ENCODE measurements at regions of chr7 and their contacts with region 1.

Region 1: GRCh38 chr7:44973610-44974401 is 5.0 kb downstream of the MYO1G start:
- DNase-seq: peak; percentile 44 to 72 (median 61)
- H3K4me3 ChIP-seq: no peak overlapping the region
- H3K4me3 Mint-ChIP-seq: peak overlapping the region in 1 of 8 donors; percentile 46
- H3K27ac ChIP-seq: peak overlapping the region; percentile 85
- H3K27ac Mint-ChIP-seq: peak overlapping the region in 6 of 7 donors; percentile 43 to 84 (median 51)
- H3K4me1 ChIP-seq: peaks cover 50% of the 10 kb centered on the region
- H3K4me1 Mint-ChIP-seq: peaks cover 12 to 62% (median 37%) of the 10 kb centered on the region in 4 donors
- H3K27me3 ChIP-seq: no peaks in the 10 kb centered on the region
- H3K27me3 Mint-ChIP-seq: no peaks in the 10 kb centered on the region

Region 2: DNA sequence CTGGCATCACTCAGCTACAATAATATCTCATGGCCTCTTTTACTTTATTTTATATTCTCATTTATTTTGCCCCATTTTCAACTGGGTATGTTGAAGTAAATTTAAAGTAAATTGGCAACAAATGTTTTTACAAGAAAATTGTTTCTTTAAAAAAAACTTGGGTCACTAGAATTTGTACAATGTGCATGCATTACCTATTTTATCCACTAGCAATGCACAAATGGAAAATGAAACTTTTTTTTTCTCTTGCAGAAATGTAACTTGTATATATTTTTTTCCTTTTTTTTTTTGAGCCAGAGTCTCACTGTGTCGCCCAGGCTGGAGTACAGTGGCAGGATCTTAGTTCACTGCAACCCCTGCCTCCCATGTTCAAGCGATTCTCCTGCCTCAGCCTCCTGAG is 115.6 kb before region 1 on chr7:
- CTCF ChIA-PET with region 1: interaction called, 11 read pairs
- POLR2A ChIA-PET with region 1: no interaction called
- intact Hi-C with region 1: no loop called
- DNase-seq: no peak
- H3K4me3 ChIP-seq: no peak overlapping the region
- H3K4me3 Mint-ChIP-seq: no peak overlapping the region
- H3K27ac ChIP-seq: no peak overlapping the region
- H3K27ac Mint-ChIP-seq: peak overlapping the region in 1 of 7 donors; percentile 24
- H3K4me1 ChIP-seq: peaks cover 5% of the 10 kb centered on the region
- H3K4me1 Mint-ChIP-seq: peaks cover 3 to 6% (median 4%) of the 10 kb centered on the region in 4 donors
- H3K27me3 ChIP-seq: no peaks in the 10 kb centered on the region
- H3K27me3 Mint-ChIP-seq: peaks cover 0 to 7% of the 10 kb centered on the region in 2 donors

Region 3: DNA sequence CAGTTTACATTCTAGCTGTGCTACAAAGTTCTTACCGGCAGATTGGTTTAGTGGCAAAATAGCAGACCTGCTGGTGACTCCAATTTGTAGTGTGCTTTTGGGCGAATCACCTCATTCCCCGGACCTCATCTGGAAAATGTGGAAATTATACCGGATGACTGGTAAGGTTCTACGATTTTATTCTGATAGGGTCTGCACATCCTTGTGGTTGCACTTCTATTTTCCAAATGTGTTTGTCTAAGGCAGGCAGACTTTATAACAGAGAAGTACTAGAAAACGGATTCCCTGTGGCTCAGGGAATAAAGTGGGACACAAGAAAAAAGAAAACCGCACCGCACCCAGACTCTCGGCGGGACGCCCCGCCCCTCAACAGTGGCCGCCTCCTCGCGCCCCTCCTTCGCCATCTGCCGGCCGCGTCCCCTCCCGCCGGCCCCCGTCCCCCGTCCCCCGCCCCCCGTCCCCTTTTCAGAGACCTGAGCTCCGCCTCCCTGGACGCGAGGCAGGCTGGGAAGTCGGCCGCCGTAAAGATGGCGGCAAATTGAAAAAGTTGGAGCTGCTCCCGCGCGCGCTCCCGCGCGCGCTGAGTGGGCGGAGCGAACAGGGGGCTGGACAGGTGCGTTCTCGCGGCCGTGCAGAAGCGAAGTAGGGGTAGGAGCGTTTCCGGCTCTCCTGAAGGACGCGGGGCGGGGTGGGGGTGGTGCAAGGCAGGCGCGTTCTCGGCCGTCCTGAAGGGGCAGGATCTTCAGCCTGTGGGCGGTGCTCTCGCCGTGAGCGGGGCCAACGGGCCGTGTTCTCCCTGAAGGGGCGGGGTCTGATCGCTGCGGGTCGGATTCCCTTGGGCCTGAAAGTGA is 25.7 kb after region 1 on chr7:
- CTCF ChIA-PET with region 1: interaction called, 150 read pairs
- POLR2A ChIA-PET with region 1: interaction called, 479 read pairs
- intact Hi-C with region 1: loop called (anchors 1 kb)
- DNase-seq: peak; percentile 98 to 99 (median 99)
- H3K4me3 ChIP-seq: peak overlapping the region; percentile 18 to 60
- H3K4me3 Mint-ChIP-seq: peak overlapping the region; percentile 94 to 99 (median 96)
- H3K27ac ChIP-seq: peak overlapping the region; percentile 74
- H3K27ac Mint-ChIP-seq: peak overlapping the region; percentile 94 to 99 (median 97)
- H3K4me1 ChIP-seq: peaks cover 66% of the 10 kb centered on the region
- H3K4me1 Mint-ChIP-seq: peaks cover 38 to 63% (median 51%) of the 10 kb centered on the region in 4 donors
- H3K27me3 ChIP-seq: no peaks in the 10 kb centered on the region
- H3K27me3 Mint-ChIP-seq: no peaks in the 10 kb centered on the region

Region 4: DNA sequence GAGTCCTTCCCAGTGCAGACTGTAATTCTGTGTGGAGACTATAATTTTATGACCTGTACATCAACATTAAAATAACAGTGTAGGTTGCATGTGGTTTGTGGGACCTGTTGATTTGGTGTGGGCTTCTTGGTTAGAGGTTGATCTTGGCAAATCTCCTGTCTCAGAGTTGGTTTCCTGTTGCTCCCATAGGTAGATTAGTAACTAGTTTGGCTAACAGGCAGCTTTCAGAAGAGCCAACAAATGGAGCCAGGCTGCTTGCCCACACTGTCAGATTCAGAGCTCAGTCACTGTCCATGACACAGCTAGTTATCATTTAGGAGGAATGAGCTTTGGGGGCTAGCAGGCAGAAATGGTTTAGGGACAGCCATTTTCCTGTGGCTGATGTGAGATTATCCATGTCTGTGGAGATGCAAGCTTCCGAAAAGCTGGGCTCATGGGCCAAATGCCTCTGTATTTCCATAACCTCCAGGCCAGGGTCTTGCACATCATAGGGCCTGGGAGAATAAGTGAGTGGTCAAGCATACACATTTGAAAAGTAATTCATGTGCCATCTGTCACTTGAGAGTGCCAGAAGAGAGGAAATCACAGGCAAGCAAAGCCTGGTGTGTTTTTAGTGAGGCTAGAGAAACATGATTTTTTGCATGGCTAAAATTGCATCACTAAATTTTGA is 59.6 kb after region 1 on chr7:
- CTCF ChIA-PET with region 1: interaction called, 120 read pairs
- POLR2A ChIA-PET with region 1: interaction called, 551 read pairs
- intact Hi-C with region 1: no loop called
- DNase-seq: peak; percentile 23 to 47 (median 29)
- H3K4me3 ChIP-seq: peak overlapping the region in 1 of 2 donors; percentile 27
- H3K4me3 Mint-ChIP-seq: peak overlapping the region; percentile 65 to 86 (median 70)
- H3K27ac ChIP-seq: peak overlapping the region; percentile 22
- H3K27ac Mint-ChIP-seq: peak overlapping the region; percentile 63 to 90 (median 86)
- H3K4me1 ChIP-seq: peaks cover 95% of the 10 kb centered on the region
- H3K4me1 Mint-ChIP-seq: peaks cover 55 to 86% (median 67%) of the 10 kb centered on the region in 4 donors
- H3K27me3 ChIP-seq: no peaks in the 10 kb centered on the region
- H3K27me3 Mint-ChIP-seq: no peaks in the 10 kb centered on the region

Region 5: GRCh38 chr7:45061806-45062425 is 88.1 kb after region 1 on chr7:
- CTCF ChIA-PET with region 1: interaction called, 10 read pairs
- POLR2A ChIA-PET with region 1: interaction called, 6 read pairs
- intact Hi-C with region 1: no loop called
- DNase-seq: no peak
- H3K4me3 ChIP-seq: no peak overlapping the region
- H3K4me3 Mint-ChIP-seq: peak overlapping the region in 3 of 8 donors; percentile 8 to 64 (median 21)
- H3K27ac ChIP-seq: no peak overlapping the region
- H3K27ac Mint-ChIP-seq: peak overlapping the region; percentile 7 to 86 (median 43)
- H3K4me1 ChIP-seq: peaks cover 57% of the 10 kb centered on the region
- H3K4me1 Mint-ChIP-seq: peaks cover 34 to 84% (median 54%) of the 10 kb centered on the region in 4 donors
- H3K27me3 ChIP-seq: no peaks in the 10 kb centered on the region
- H3K27me3 Mint-ChIP-seq: no peaks in the 10 kb centered on the region

Region 6: GRCh38 chr7:45122975-45123860 is 149.4 kb after region 1 on chr7:
- CTCF ChIA-PET with region 1: interaction called, 10 read pairs
- POLR2A ChIA-PET with region 1: no interaction called
- intact Hi-C with region 1: no loop called
- DNase-seq: peak in 2 of 5 donors; percentile 15 to 23
- H3K4me3 ChIP-seq: peak overlapping the region; percentile 9 to 19
- H3K4me3 Mint-ChIP-seq: peak overlapping the region in 7 of 8 donors; percentile 60 to 87 (median 77)
- H3K27ac ChIP-seq: peak overlapping the region; percentile 29
- H3K27ac Mint-ChIP-seq: peak overlapping the region; percentile 40 to 94 (median 87)
- H3K4me1 ChIP-seq: peaks cover 26% of the 10 kb centered on the region
- H3K4me1 Mint-ChIP-seq: peaks cover 14 to 27% (median 18%) of the 10 kb centered on the region in 4 donors
- H3K27me3 ChIP-seq: no peaks in the 10 kb centered on the region
- H3K27me3 Mint-ChIP-seq: no peaks in the 10 kb centered on the region